ENCODE measurements at regions of chr11 and their contacts with region 1.

Region 1: GRCh38 chr11:70924108-70924507 is 328.3 kb downstream of the SHANK2 start:
- DNase-seq: no peak

Region 2: DNA sequence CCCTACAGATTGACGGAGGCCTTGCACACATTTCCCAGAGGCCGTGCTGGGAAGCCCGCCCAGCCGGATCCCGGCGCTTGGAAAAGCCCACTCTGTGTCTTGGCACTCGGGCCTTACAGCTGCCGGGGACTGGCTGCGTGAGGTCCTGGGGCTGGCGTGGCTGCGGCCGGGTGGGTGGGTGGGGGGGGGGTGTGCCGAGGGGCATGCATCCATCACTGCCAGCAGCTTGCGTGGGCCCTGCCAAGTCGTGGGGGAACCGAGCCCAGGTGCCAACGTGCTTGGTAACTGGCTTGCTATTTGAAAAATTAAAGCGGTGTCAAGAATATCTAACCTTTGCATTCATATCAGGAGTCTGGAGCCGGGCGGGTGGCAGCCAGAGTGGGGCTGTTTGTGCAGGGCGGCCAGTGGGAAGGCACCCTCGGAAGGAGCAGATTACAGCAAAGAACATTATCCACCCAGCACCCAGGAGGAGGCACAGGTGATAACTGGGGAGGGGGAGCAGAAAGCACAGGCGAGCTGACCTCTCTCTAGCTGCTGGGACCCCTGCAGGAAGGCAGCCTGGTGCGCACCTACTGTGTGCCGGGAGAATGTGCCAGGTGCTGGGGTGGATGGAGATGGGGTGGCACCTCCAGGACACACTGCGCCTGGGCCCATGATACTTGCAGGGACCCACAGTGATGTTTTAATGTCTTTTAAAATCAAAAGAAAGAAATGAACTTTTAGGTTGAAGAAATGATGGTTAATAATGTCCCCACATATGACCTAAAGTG is 1796.8 kb before region 1 on chr11:
- intact Hi-C with region 1: loop called in 1 of 2 experiments (anchors 5 kb)
- DNase-seq: peak; percentile 82